ENCODE measurements at regions of chr12 and their contacts with region 1.

Region 1: GRCh38 chr12:51424662-51425438 is at the start of gene SLC4A8:
- DNase-seq: peak; percentile 78
- H3K4me3 ChIP-seq: peak within 1 kb of the TSS; percentile 21 to 59 (median 33)
- H3K27ac ChIP-seq: no peak within 1 kb of the TSS
- H3K4me1 ChIP-seq: peaks cover 7% of the 10 kb centered on the region
- H3K27me3 ChIP-seq: no peaks in the 10 kb centered on the region
- CTCF ChIP-seq: peak; percentile 86 to 91
- POLR2A ChIP-seq: peak; percentile 37
- total RNA-seq, gene SLC4A8: 7.1 and 9.7 TPM in 2 replicates

Region 2: GRCh38 chr12:51391283-51392162 is 33.3 kb before region 1 on chr12 and contains the start of gene GALNT6:
- CTCF ChIA-PET with region 1: interaction called, 20 read pairs
- POLR2A ChIA-PET with region 1: no interaction called
- dilution Hi-C with region 1: no loop called
- intact Hi-C with region 1: no loop called
- DNase-seq: peak; percentile 29
- H3K4me3 ChIP-seq: peak within 1 kb of the TSS; percentile 66 to 72 (median 71)
- H3K27ac ChIP-seq: peak within 1 kb of the TSS; percentile 67
- H3K4me1 ChIP-seq: peaks cover 43% of the 10 kb centered on the region
- H3K27me3 ChIP-seq: no peaks in the 10 kb centered on the region
- CTCF ChIP-seq: no peak
- POLR2A ChIP-seq: no peak
- total RNA-seq, gene GALNT6: 38.3 and 39.2 TPM in 2 replicates

Region 3: DNA sequence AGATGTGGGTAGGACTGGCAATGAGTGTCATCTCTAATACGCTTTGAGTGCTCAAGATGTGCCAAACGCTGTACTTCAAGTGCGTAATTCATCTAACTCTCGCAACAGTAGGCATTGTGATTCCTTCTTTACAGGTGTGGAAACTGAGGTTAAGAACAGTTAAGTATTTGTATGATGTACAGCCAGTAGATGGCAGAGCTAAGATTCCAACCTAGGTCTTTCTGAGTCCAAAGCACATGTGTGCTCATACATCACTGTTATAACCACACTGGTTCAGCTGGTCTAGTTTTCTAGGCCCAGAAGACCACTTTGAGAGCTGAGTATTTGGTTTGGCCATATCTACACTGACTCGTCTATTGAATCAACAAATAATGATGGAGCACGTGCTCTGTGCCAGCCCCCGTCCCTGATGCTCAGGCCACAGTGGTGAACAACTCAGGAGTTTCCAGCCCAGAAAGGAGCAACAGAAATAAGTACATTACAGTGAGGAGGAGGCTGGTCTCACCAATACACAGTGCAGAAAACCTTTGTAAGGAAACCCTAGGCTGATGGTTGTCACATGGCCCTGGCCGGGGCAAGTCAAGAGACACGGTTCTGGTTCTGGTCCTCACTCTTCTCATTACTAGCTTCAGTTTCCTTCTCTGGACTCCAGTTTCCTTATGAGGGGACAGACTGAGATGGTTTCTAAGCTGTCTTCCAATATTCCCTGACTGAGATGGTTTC is 96.9 kb after region 1 on chr12:
- CTCF ChIA-PET with region 1: interaction called, 14 read pairs
- POLR2A ChIA-PET with region 1: no interaction called
- dilution Hi-C with region 1: no loop called
- intact Hi-C with region 1: no loop called
- DNase-seq: peak; percentile 10
- H3K4me3 ChIP-seq: no peak overlapping the region
- H3K27ac ChIP-seq: no peak overlapping the region
- H3K4me1 ChIP-seq: no peaks in the 10 kb centered on the region
- H3K27me3 ChIP-seq: peaks cover 0 to 7% of the 10 kb centered on the region in 2 experiments
- CTCF ChIP-seq: peak in 1 of 2 donors; percentile 12
- POLR2A ChIP-seq: no peak

Region 4: GRCh38 chr12:51531978-51532497 is 107.2 kb after region 1 on chr12:
- CTCF ChIA-PET with region 1: interaction called, 140 read pairs
- POLR2A ChIA-PET with region 1: no interaction called
- dilution Hi-C with region 1: no loop called
- intact Hi-C with region 1: loop called (anchors 1 kb)
- DNase-seq: peak; percentile 73
- H3K4me3 ChIP-seq: no peak overlapping the region
- H3K27ac ChIP-seq: no peak overlapping the region
- H3K4me1 ChIP-seq: no peaks in the 10 kb centered on the region
- H3K27me3 ChIP-seq: peaks cover 2 to 3% of the 10 kb centered on the region in 2 experiments
- CTCF ChIP-seq: peak; percentile 82 to 90
- POLR2A ChIP-seq: no peak

Region 5: GRCh38 chr12:51678086-51678724 is 253.4 kb after region 1 on chr12:
- CTCF ChIA-PET with region 1: interaction called, 4 read pairs
- POLR2A ChIA-PET with region 1: no interaction called
- dilution Hi-C with region 1: no loop called
- intact Hi-C with region 1: loop called (anchors 5 kb)
- DNase-seq: peak; percentile 73
- H3K4me3 ChIP-seq: no peak overlapping the region
- H3K27ac ChIP-seq: no peak overlapping the region
- H3K4me1 ChIP-seq: peaks cover 3% of the 10 kb centered on the region
- H3K27me3 ChIP-seq: no peaks in the 10 kb centered on the region
- CTCF ChIP-seq: peak; percentile 76 to 83
- POLR2A ChIP-seq: no peak

Region 6: DNA sequence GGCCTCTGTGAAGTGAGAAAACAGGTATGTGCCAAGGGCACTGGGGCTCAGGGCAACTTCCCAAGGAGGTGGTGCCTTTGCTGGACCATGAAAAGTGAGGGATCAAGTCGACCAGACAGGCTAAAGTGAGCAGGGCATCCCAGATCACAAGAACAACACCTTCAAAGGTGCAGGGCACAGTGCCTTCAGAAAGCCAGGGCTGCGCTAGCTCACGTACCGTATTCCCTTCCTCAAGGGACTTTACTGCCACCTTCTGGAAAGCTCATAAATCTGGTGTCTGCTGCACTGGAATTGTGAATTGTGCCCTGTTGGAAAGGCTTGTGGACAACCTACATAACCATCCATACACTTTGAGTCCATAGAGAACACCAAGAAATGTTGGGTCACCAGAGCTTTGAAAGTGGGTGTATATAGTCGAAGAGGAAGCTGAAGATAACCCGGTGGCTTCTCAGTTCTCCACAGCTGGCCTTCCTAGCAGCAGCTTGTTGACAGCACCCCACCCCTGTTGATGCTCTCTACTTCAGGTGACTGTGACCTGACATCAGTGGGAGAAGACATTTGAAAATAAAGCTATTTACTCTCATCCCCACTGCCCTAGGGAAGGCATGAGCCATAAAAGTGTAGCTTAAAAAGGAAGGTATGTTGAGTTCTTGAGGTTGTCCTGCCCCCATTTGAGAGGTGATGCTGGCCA is 399.2 kb after region 1 on chr12:
- CTCF ChIA-PET with region 1: interaction called, 43 read pairs
- POLR2A ChIA-PET with region 1: no interaction called
- dilution Hi-C with region 1: no loop called
- intact Hi-C with region 1: loop called (anchors 1 kb)
- DNase-seq: peak; percentile 55
- H3K4me3 ChIP-seq: no peak overlapping the region
- H3K27ac ChIP-seq: no peak overlapping the region
- H3K4me1 ChIP-seq: peaks cover 3% of the 10 kb centered on the region
- H3K27me3 ChIP-seq: no peaks in the 10 kb centered on the region
- CTCF ChIP-seq: peak; percentile 60 to 68
- POLR2A ChIP-seq: no peak

Measured in endothelial cell of umbilical vein (primary cell).